ENCODE measurements at regions of chr22 and their contacts with region 1.

Region 1: DNA sequence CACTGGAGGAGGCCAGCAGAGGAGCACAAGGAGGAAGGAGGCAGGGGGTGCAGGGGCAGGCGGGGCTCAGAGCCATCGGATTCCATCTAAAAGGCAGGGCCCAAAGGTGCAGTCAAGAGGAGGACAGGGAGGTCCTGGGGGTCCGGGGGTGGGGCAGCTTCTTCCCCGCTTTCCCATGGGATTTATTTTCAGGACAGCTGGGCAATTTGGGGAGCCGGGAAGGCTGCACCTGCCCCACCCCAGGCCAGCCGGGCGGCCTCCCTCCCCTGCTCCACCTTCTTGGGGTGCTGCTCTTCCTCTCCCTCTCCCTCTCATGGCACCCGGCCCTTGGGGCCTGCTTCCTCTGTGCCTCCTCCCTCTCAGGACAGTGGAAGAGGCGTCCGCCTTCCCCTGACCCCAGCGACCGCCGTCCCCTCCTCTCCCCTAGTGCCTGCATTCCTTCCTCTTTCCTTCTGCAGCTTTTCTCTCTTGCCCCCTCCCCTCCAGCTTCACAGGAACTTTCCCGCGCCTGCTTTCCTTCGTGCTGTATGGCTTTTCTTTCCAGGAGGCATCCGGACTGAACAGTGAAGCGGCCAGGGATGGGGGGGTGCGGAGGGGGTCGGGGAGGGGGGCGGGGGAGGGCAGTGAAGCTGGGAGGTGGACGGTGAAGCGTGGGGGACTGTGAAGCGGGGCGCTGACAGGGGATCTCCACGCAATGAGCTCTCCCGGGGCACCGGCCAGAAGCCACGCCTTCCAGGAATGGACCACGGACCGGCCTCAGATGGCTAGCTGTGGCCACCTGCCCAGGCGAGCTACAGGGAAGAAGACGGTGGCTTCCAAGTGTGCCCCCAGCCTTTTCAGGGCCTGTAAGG is 26.9 kb downstream of the APOBEC3H start:
- DNase-seq: no peak
- ATAC-seq: no peak
- H3K4me3 ChIP-seq: no peak overlapping the region
- H3K27ac ChIP-seq: no peak overlapping the region
- H3K4me1 ChIP-seq: no peaks in the 10 kb centered on the region
- H3K27me3 ChIP-seq: peaks cover under 1 to 4% (median under 1%) of the 10 kb centered on the region in 3 donors
- CTCF ChIP-seq: no peak
- POLR2A ChIP-seq: no peak

Region 2: DNA sequence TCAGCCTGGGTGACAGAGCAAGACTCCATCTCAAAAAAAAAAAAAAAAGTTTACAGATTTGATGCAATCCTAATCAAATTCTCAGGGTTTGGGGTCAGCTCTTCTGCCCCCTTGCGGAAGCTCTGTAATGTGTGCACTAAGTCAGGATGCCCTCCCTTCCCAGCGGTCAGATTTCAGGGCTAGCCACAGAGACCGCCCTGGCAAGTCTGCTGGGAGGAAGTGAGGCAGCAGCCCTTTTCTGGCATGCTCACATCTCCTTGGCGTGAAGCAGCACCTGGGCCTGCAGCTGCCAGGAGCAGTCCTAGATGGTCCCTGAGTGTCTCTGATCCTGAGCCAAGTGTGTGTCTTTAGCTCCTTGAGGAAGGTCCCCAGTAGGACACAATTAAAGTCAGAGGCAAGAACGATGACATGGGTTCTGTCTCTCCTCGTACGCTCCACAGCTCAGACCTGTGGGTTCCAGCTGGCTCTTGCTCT is 120.8 kb before region 1 on chr22:
- in situ Hi-C with region 1: no loop called
- intact Hi-C with region 1: loop called (anchors 5 kb)
- DNase-seq: peak; percentile 27 to 43
- ATAC-seq: peak; percentile 68 to 77
- H3K4me3 ChIP-seq: no peak overlapping the region
- H3K27ac ChIP-seq: no peak overlapping the region
- H3K4me1 ChIP-seq: no peaks in the 10 kb centered on the region
- H3K27me3 ChIP-seq: peaks cover 0 to 5% (median 0%) of the 10 kb centered on the region in 3 donors
- CTCF ChIP-seq: peak; percentile 49 to 75 (median 65)
- POLR2A ChIP-seq: no peak

Region 3: DNA sequence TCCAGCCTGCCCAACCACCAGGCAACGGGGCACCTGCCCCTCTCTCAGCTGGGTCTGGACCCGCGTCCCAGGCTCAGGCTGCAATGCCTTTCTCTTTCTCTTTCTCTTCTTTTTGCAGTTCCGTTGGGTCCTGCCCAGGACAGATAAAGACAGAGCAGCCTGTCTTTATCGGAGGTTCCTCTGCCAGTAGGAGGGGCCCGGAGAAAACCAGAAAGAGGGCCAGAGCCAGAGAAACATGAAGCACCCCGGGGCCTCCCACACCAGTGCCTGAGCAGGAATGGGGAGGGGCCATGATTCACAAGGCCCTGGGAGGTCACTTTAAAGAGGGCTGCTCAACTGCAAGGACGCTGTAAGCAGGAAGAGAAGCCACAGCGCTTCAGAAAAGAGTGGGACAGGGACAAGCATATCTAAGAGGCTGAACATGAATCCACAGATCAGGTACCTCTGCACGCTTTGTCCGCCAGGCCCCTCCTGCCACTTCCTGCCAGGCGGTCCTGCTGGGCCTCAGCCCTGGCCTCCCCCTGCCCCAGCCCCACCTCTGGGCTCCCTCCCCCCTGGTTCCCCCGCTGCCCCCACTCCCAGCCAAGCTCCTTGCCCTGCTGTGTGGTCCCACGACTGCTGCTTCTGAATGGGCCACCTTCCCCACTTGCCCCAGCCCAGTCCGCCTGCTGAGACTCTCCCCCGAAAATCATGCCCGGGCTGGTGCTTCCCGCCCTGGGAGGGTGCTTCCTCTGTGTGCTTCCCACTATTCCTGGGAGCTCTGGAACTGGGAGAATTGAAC is 109.8 kb before region 1 on chr22 and contains the start of gene APOBEC3C:
- in situ Hi-C with region 1: loop called in 1 of 4 experiments (anchors 5 kb)
- intact Hi-C with region 1: loop called (anchors 5 kb)
- DNase-seq: peak; percentile 56 to 73
- ATAC-seq: peak; percentile 54 to 83
- H3K4me3 ChIP-seq: peak within 1 kb of the TSS; percentile 27 to 49 (median 38)
- H3K27ac ChIP-seq: peak within 1 kb of the TSS; percentile 37 to 61 (median 46)
- H3K4me1 ChIP-seq: no peaks in the 10 kb centered on the region
- H3K27me3 ChIP-seq: no peaks in the 10 kb centered on the region
- CTCF ChIP-seq: no peak
- POLR2A ChIP-seq: peak; percentile 23 to 39
- total RNA-seq, gene APOBEC3C: 0.58 to 1.5 (median 1.0) TPM

Region 4: DNA sequence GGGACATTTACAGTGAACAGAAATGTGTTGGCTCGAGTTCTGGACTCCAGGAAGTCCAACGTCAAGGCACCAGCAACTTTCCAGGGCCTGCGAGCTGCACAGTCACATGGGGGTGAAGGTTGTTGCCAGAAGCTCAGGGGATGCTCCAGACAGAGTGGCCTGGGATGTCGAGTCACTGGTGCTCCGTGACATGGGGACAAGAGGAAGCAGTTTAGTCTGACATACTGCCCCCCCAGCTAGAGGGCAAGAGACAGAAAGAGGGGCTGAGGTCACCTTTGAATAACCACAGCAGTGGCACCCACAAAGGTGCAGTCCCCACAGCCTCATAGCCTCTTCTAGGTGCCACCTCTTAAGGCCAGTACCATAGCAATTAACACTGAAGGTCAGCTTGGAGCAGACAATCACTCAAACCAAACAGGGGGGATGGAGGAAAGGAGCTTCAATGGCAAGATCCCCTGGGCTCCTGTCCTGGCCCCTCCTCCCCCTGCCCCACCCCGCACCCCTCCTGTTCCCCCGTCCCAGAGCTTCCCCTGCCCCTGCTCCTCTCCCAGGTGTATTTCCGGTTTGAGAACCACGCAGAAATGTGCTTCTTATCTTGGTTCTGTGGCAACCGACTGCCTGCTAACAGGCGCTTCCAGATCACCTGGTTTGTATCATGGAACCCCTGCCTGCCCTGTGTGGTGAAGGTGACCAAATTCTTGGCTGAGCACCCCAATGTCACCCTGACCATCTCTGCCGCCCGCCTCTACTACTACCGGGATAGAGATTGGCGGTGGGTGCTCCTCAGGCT is 99.3 kb before region 1 on chr22:
- in situ Hi-C with region 1: no loop called
- intact Hi-C with region 1: no loop called
- DNase-seq: no peak
- ATAC-seq: no peak
- H3K4me3 ChIP-seq: no peak overlapping the region
- H3K27ac ChIP-seq: no peak overlapping the region
- H3K4me1 ChIP-seq: no peaks in the 10 kb centered on the region
- H3K27me3 ChIP-seq: no peaks in the 10 kb centered on the region
- CTCF ChIP-seq: no peak
- POLR2A ChIP-seq: no peak